ENCODE measurements at regions of chr5 and their contacts with region 1.

Region 1: GRCh38 chr5:142561486-142562097 is 124.3 kb downstream of the FGF1 start:
- DNase-seq: no peak
- ATAC-seq: peak; percentile 14 to 93
- H3K4me3 ChIP-seq: no peak overlapping the region
- H3K27ac ChIP-seq: no peak overlapping the region
- H3K4me1 ChIP-seq: peaks cover 4% of the 10 kb centered on the region
- H3K27me3 ChIP-seq: peaks cover 4% of the 10 kb centered on the region

Region 2: DNA sequence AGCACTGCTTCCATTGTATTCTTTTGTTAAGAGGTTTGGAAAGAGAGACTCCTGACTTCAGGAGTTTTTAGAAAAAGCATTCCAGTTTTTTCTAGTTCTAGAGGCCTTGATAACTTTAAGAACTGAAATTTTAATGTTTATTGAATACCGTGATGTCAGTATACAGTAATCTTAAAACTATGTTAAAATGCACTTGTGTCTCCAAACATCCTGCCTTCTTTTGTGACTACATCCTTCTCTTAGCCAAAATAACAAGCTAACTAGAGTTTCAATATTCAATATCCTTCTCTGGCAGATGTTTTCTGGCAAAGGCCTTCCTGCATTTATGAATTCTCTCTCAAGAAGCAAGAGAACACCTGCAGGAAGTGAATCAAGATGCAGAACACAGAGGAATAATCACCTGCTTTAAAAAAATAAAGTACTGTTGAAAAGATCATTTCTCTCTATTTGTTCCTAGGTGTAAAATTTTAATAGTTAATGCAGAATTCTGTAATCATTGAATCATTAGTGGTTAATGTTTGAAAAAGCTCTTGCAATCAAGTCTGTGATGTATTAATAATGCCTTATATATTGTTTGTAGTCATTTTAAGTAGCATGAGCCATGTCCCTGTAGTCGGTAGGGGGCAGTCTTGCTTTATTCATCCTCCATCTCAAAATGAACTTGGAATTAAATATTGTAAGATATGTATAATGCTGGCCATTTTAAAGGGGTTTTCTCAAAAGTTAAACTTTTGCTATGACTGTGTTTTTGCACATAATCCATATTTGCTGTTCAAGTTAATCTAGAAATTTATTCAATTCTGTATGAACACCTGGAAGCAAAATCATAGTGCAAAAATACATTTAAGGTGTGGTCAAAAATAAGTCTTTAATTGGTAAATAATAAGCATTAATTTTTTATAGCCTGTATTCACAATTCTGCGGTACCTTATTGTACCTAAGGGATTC is 409.9 kb before region 1 on chr5:
- intact Hi-C with region 1: loop called in 2 of 4 experiments (anchors 5 kb)
- DNase-seq: peak in 1 of 3 donors; percentile 71
- ATAC-seq: peak; percentile 65 to 74
- H3K4me3 ChIP-seq: no peak overlapping the region
- H3K27ac ChIP-seq: no peak overlapping the region
- H3K4me1 ChIP-seq: no peaks in the 10 kb centered on the region
- H3K27me3 ChIP-seq: no peaks in the 10 kb centered on the region